ENCODE measurements at regions of chr11 and their contacts with region 1.

Region 1: GRCh38 chr11:18105802-18106574 is at the start of gene SAAL1:
- DNase-seq: peak; percentile 86 to 94 (median 88)
- ATAC-seq: peak; percentile 93 to 99 (median 98)
- H3K4me3 ChIP-seq: peak within 1 kb of the TSS; percentile 66 to 98 (median 88)
- H3K27ac ChIP-seq: peak within 1 kb of the TSS in 11 of 12 donors; percentile 21 to 81 (median 70)
- H3K4me1 ChIP-seq: peaks cover 0 to 19% (median 10%) of the 10 kb centered on the region in 12 donors
- H3K27me3 ChIP-seq: peaks cover 0 to 15% (median 0%) of the 10 kb centered on the region in 9 donors
- CTCF ChIP-seq: peak; percentile 34 to 93 (median 78)
- POLR2A ChIP-seq: peak in 1 of 2 donors; percentile 46
- total RNA-seq, gene SAAL1: 4.9 to 7.6 (median 6.6) TPM

Region 2: DNA sequence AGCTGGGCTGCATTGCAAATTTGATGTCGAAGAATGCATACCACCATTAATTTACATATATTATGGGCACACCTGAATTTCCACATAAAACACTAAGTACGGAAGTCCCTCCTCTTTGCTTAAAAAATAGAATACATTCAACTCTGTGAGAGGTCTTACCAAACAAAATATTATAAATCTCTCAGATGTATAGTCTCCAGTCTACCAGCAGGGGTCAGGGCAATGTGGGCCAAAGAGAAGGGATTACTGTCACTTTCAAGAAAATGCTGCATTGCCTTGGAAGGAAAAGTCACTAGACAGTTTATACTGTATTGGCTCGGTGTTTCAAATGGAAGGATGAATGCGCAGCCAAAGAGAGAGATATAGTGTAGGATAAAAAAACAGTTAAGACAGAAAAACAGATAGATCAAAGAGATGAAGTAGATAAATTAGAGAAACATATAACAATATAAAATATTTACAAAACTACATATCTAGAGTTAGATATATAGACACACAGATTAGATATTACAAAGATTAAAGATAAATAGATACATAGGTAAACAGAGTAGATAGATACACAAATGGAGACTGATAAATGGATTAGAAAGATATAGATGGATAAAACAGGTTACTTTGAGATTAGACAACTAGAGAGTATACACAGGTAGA is 114.1 kb before region 1 on chr11:
- intact Hi-C with region 1: loop called in 3 of 10 experiments (anchors 2 to 10 kb)
- DNase-seq: no peak
- ATAC-seq: peak in 2 of 4 donors; percentile 47 to 68
- H3K4me3 ChIP-seq: no peak overlapping the region
- H3K27ac ChIP-seq: no peak overlapping the region
- H3K4me1 ChIP-seq: no peaks in the 10 kb centered on the region
- H3K27me3 ChIP-seq: no peaks in the 10 kb centered on the region
- CTCF ChIP-seq: peak; percentile 57 to 86 (median 74)
- POLR2A ChIP-seq: no peak

Region 3: GRCh38 chr11:18012863-18013781 is 92.9 kb before region 1 on chr11 and contains the start of gene SERGEF:
- intact Hi-C with region 1: loop called in 8 of 10 experiments (anchors 2 to 10 kb)
- DNase-seq: peak; percentile 90 to 98 (median 95)
- ATAC-seq: peak; percentile 88 to 99 (median 98)
- H3K4me3 ChIP-seq: peak within 1 kb of the TSS; percentile 68 to 97 (median 80)
- H3K27ac ChIP-seq: peak within 1 kb of the TSS; percentile 53 to 87 (median 79)
- H3K4me1 ChIP-seq: peaks cover 0 to 18% (median 6%) of the 10 kb centered on the region in 12 donors
- H3K27me3 ChIP-seq: no peaks in the 10 kb centered on the region
- CTCF ChIP-seq: peak in 6 of 12 donors; percentile 15 to 54 (median 20)
- POLR2A ChIP-seq: peak in 1 of 2 donors; percentile 55
- total RNA-seq, gene SERGEF: 11.6 to 26.4 (median 22.1) TPM

Region 4: DNA sequence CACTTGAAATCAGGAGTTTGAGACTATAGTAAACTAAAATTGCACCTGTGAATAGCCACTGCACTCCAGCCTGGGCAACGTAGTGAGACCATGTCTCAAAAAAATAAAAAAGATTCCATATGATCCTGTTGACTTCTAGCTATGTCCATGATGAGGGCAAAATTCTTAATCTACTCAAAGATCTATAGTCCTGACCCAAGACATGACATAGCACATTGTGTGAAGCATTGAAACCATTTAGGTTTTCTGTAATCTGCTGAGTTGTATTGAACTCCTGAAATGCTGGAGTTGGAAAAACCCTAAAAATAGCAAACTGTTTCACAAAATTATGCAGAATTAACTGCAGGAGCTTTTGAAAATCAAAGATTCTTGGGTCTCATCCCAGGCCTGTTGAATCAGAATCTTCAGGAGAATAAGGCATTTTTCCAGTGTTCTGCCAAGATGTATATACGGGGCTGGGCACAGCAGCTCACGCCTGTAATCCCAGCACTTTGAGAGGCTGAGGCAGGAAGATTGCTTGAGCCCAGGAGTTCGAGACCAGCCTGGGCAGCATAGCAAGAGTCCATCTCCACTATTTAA is 258.6 kb after region 1 on chr11:
- intact Hi-C with region 1: no loop called
- DNase-seq: no peak
- ATAC-seq: no peak
- H3K4me3 ChIP-seq: no peak overlapping the region
- H3K27ac ChIP-seq: no peak overlapping the region
- H3K4me1 ChIP-seq: no peaks in the 10 kb centered on the region
- H3K27me3 ChIP-seq: no peaks in the 10 kb centered on the region
- CTCF ChIP-seq: no peak
- POLR2A ChIP-seq: no peak

Measured in heart left ventricle (tissue), 16 donors.